Transverse colon (tissue), 4 donors: ENCODE measurements at regions of chr22 and their contacts with region 1.

Region 1: DNA sequence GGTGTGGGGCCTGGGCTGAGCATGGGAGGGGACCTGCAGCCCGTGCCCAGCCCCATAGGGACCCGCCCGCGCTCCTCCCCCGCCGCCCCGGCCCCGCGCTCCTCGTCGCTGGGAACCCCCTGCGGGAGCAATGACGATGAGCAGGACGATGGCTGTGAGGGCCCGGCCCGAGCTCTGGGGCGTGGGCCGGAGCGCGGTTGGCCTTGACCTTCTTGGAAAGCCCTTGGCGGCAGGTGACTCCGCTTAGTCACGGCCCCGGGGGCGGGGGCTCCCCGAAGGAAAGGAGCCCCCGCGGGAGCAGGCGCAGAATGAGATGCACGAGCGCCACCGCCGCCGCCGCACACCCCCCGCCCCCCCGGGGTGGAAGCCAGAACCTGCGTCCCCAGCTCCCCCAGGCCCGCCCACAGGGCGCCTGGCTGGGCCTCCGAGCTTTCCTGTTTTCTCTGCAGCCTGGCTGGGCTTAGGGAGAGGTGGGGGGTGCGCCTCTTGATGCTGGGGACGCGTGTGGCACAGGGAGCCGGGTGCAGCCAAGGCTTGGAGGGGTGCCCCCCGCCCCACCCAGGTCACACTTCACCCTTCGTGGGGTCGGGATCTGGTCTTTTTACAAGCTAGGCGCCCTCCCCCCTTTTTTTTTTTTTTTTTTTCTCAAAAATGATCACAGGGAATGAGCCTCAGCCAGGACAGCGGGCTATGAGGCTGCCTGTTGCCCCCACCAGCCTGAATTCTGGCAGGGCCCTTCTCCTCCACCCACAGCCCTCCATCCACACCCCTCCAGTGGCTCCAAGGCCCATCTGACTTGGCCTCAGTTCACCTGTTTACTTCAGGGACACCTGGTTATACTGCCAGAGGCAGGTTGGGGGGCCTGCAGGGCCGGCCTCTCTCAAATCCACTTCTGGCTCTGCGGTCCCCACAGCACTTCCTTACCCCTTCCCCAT is 17.9 kb downstream of the CRELD2 start:
- DNase-seq: peak; percentile 92
- H3K4me3 ChIP-seq: peak overlapping the region; percentile 33 to 44 (median 39)
- H3K27ac ChIP-seq: peak overlapping the region; percentile 86 to 97 (median 92)
- H3K4me1 ChIP-seq: peaks cover 36 to 53% (median 40%) of the 10 kb centered on the region in 4 donors
- H3K27me3 ChIP-seq: no peaks in the 10 kb centered on the region
- CTCF ChIP-seq: no peak
- EP300 ChIP-seq: peak; percentile 77
- POLR2A ChIP-seq: peak; percentile 47

Region 2: DNA sequence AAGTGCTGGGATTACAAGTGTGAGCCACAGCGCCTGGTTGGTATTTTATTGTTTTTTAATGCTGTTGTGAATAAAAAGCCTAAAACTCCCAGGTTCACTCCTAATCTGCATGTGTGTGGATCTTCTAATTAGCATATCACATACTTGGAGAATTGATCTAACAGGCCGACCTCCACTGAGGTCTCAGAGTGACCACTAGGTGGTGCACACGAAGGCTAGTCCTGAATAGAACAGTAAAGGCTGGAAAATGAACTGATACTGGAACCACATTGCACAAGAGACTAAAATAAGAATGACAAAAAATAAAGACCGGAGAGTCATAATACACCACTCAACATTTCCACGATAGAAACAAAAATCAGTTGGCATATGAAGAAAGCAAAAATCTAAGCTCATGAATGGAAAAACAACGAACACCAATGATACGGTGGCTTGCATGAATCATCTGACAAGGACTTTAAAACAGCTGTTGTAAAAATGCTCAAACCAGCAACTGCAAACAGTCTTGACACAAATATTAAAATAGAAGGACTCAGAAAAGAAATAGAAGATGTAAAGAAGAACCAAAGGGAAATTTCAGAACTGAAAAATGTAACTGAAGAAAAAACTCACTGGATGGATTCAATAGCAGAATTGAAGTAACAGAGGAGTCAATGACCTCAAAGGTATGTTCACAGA is 43.4 kb after region 1 on chr22:
- in situ Hi-C with region 1: loop called in 1 of 4 experiments (anchors 10 kb)
- intact Hi-C with region 1: no loop called
- DNase-seq: peak; percentile 53
- H3K4me3 ChIP-seq: no peak overlapping the region
- H3K27ac ChIP-seq: no peak overlapping the region
- H3K4me1 ChIP-seq: peaks cover 5 to 20% (median 10%) of the 10 kb centered on the region in 4 donors
- H3K27me3 ChIP-seq: peaks cover 33% of the 10 kb centered on the region
- CTCF ChIP-seq: peak; percentile 54 to 68 (median 58)
- EP300 ChIP-seq: no peak
- POLR2A ChIP-seq: no peak